ENCODE measurements at regions of chr12 and their contacts with region 1.

Region 1: GRCh38 chr12:56688129-56688845 is at the start of gene PTGES3:
- DNase-seq: peak; percentile 92 to 97
- H3K4me3 ChIP-seq: peak within 1 kb of the TSS; percentile 97
- H3K27ac ChIP-seq: peak within 1 kb of the TSS; percentile 94
- H3K4me1 ChIP-seq: peaks cover 15% of the 10 kb centered on the region
- H3K27me3 ChIP-seq: no peaks in the 10 kb centered on the region
- CTCF ChIP-seq: no peak
- total RNA-seq, gene PTGES3: 227 and 322 TPM in 2 replicates

Region 2: DNA sequence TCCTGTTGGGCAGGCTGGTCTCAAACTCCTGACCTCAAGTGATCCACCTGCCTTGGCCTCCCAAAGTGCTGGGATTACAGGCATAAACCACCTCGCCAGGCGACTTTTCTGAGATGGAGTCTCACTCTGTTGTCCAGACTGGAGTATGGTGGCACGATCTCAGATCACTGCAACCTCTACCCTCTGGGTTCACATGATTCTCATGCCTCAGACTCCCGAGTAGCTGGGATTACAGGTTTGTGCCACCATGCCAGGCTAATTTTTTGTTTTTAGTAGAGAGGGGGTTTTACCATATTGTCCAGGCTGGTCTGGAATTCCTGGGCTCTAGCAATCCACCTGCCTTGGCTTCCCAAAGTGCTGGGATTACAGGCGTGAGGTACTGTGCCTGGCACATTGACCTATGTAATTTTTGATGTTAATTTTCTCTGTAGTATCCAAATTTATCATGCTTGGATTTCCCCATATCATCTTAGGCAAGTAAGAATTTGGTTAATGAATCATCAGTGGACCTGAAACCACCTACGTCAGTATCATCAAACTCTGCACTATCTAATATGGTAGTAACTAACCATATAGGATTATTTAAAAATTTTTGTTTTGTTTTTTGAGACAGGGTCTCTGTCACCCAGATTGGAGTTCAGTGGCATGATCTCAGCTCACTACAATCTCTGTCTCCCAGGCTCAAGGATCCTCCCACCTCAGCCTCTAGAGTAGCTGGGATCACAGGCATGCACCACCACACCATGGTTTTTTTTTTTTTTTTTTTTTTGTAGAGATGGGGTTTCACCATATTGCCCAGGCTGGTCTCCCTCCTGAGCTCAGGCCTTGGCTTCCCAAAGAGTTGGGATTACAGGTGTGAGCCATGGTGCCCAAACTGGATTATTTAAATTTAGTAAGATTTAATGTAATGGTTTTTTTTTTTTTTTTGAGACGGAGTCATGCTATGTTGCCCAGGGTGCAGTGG is 30.6 kb before region 1 on chr12:
- CTCF ChIA-PET with region 1: no interaction called
- POLR2A ChIA-PET with region 1: interaction called, 18 read pairs
- intact Hi-C with region 1: loop called (anchors 2 kb)
- DNase-seq: no peak
- H3K4me3 ChIP-seq: no peak overlapping the region
- H3K27ac ChIP-seq: no peak overlapping the region
- H3K4me1 ChIP-seq: peaks cover 31% of the 10 kb centered on the region
- H3K27me3 ChIP-seq: no peaks in the 10 kb centered on the region
- CTCF ChIP-seq: no peak

Region 3: DNA sequence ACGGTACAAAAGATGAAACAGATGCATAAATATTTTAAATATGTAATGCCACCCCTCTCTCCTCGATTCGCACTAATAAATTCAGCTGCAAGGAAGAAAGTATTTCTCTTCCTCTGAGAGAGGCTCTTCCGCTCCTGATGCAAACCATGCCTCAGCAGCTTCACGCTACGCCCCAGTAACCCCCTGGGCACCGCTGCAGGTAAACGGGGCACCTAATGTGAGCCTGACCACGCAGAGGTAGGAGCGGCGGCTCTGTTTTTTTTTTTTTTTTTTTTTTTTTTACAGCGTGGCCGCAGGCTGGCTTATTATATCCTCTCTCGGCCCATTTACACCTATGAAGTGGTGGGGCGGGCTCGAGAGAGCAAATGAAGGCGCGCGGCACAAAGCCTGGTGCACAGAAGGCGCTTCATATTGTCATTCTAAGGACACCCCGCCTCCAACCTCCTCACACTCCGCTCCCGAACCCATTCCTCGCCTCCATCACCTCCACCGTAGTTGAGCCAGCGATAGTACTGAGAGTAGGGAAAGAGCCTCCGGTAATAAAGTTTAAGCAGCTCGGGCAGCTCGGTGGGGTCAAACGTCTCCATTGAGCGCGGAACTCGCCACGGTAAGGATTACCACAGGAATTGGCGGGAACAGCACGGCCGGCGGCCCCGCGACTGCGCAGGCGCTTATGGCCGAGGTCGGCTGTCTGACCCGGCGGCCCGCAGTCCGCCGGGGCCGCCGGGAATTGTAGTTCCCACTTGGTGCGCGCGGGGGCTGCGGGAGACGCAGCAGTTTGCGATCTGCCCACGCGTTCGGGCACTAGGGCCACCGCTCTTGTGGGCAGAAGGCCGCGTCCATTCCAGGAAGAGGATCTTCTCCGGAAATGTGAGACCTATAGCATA is 63.7 kb after region 1 on chr12 and contains the start of gene PRIM1:
- CTCF ChIA-PET with region 1: interaction called, 5 read pairs
- POLR2A ChIA-PET with region 1: interaction called, 5 read pairs
- intact Hi-C with region 1: loop called (anchors 2 kb)
- DNase-seq: peak; percentile 71 to 85
- H3K4me3 ChIP-seq: peak within 1 kb of the TSS; percentile 66
- H3K27ac ChIP-seq: peak within 1 kb of the TSS; percentile 21
- H3K4me1 ChIP-seq: peaks cover 8% of the 10 kb centered on the region; the same call in 1 of the 2 replicates
- H3K27me3 ChIP-seq: no peaks in the 10 kb centered on the region
- CTCF ChIP-seq: peak; percentile 58
- total RNA-seq, gene PRIM1: 27.2 and 35.8 TPM in 2 replicates

Region 4: DNA sequence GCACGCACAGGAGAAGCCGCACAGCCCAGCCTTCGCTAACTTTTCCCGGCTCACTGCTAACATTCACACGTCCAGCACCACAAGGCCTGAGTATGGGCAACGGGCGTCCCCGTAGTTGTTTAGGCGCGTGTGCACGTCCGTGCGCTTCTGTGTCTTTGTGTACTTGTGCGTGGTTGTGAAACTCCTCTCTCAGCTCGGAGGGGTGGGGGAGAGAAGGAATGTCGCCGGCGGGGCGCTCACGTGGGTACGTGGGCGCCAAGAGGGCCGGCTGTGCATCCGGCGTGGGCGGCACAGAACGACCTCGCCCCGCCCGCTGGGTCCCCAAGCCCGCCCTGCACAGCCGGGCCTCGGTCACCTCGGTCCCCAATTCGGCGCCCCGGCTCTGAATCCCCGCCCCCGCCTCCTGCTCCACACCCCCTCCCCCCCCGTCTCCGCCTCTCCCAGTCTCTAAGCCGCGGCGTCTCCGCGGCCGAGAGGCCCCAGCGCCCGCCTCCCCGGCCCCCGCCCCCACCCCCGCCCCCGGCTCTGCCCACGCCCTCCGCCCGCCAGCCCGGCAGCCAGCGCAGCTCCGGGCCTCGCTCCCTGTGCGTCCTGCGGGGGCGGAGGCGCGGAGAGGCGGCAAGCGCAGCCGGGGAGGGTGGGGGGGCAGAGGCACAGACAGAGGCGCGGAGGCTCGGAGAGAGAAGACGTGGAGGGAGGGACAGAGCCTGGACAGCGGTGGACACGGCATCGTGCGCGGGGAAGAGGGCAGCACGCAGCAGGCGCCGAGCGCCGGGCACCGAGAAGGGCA is 400.4 kb after region 1 on chr12 and contains the start of gene NAB2:
- CTCF ChIA-PET with region 1: no interaction called
- POLR2A ChIA-PET with region 1: no interaction called
- intact Hi-C with region 1: loop called (anchors 1 kb)
- DNase-seq: peak; percentile 82 to 95
- H3K4me3 ChIP-seq: peak within 1 kb of the TSS; percentile 94
- H3K27ac ChIP-seq: peak within 1 kb of the TSS; percentile 91
- H3K4me1 ChIP-seq: peaks cover 5% of the 10 kb centered on the region; the same call in 1 of the 2 replicates
- H3K27me3 ChIP-seq: no peaks in the 10 kb centered on the region
- CTCF ChIP-seq: no peak
- total RNA-seq, gene NAB2: 13.8 and 20.2 TPM in 2 replicates

Region 5: GRCh38 chr12:57116580-57117281 is 428.4 kb after region 1 on chr12:
- CTCF ChIA-PET with region 1: no interaction called
- POLR2A ChIA-PET with region 1: no interaction called
- intact Hi-C with region 1: no loop called
- DNase-seq: no peak
- H3K4me3 ChIP-seq: no peak overlapping the region
- H3K27ac ChIP-seq: no peak overlapping the region
- H3K4me1 ChIP-seq: peaks cover 11% of the 10 kb centered on the region
- H3K27me3 ChIP-seq: no peaks in the 10 kb centered on the region
- CTCF ChIP-seq: no peak

Measured in PC-9 (cell line).